Heart left ventricle (tissue), 16 donors: ENCODE measurements at regions of chr6 and their contacts with region 1.

Region 1: GRCh38 chr6:25223490-25223991 is 55.6 kb upstream of the CARMIL1 start:
- DNase-seq: peak; percentile 50 to 73 (median 61)
- ATAC-seq: peak in 2 of 4 donors; percentile 54 to 63
- H3K4me3 ChIP-seq: peak overlapping the region in 9 of 12 donors; percentile 23 to 39 (median 30)
- H3K27ac ChIP-seq: peak overlapping the region in 8 of 12 donors; percentile 5 to 54 (median 26)
- H3K4me1 ChIP-seq: peaks cover 2 to 33% (median 9%) of the 10 kb centered on the region in 12 donors
- H3K27me3 ChIP-seq: no peaks in the 10 kb centered on the region
- CTCF ChIP-seq: peak; percentile 77 to 94 (median 88)
- POLR2A ChIP-seq: no peak

Region 2: DNA sequence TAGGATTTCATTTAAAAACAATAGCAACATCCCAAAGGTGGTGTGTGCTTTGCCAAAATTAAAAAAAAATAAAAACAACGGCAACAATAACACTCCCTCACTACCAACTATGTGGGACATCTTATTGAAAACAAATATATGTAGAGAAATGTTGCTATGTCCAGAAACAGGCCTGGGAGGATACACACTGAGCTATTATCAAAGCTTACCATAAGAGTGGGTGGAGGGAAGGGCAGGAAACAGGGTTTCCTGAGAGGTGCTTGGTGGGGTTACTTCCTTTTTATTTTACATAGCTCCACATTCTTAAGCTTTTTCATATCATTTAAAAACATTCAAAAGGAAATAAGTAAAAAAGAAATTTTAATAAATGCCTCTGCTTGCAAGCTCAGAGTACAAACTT is 137.8 kb before region 1 on chr6:
- intact Hi-C with region 1: no loop called
- DNase-seq: peak in 2 of 5 donors; percentile 27 to 32
- ATAC-seq: peak; percentile 44 to 90 (median 84)
- H3K4me3 ChIP-seq: no peak overlapping the region
- H3K27ac ChIP-seq: peak overlapping the region; percentile 10 to 79 (median 64)
- H3K4me1 ChIP-seq: peaks cover 0 to 57% (median 16%) of the 10 kb centered on the region in 12 donors
- H3K27me3 ChIP-seq: no peaks in the 10 kb centered on the region
- CTCF ChIP-seq: no peak
- POLR2A ChIP-seq: no peak

Region 3: DNA sequence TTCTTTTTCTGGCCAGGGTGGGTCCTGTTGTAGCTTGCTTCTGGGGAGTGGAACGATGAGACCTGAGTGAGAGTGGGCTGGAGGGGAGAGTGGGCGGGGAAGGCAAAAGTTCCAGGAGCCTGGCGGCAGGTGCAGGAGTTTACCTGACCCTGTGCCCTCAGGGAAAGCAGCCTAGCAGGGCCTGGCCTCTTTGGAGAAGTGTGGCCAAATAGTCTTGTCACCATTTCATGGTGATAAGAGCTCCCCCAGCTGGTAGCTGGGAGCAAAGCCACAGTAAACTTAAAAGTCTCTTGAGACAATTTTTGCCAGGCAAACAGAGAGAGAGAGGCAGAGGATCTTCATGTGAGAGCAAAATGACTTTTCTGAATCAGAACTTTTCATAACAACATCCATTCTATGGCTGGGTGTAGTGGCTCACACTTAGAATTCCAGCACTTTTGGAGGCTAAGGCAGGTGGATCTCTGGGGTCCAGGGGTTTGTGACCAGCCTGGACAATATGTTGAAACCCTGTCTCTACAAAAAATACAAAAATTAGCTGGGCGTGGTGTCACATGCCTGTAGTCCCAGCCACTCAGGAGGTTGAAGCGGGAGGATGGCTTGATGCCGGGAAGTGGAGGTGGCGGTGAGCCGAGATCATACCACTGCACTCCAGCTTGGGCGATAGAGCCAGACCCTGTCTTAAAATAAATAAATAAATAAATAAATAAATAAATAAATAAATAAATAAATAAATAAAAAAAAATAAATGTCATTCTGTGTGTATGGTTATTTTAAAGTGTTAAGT is 266.7 kb after region 1 on chr6:
- intact Hi-C with region 1: loop called in 3 of 10 experiments (anchors 2 to 5 kb)
- DNase-seq: peak; percentile 61 to 74 (median 72)
- ATAC-seq: peak; percentile 57 to 90 (median 86)
- H3K4me3 ChIP-seq: no peak overlapping the region
- H3K27ac ChIP-seq: peak overlapping the region in 4 of 12 donors; percentile 6 to 37 (median 26)
- H3K4me1 ChIP-seq: peaks cover 0 to 28% (median 15%) of the 10 kb centered on the region in 12 donors
- H3K27me3 ChIP-seq: no peaks in the 10 kb centered on the region
- CTCF ChIP-seq: peak; percentile 59 to 87 (median 78)
- POLR2A ChIP-seq: no peak

Region 4: DNA sequence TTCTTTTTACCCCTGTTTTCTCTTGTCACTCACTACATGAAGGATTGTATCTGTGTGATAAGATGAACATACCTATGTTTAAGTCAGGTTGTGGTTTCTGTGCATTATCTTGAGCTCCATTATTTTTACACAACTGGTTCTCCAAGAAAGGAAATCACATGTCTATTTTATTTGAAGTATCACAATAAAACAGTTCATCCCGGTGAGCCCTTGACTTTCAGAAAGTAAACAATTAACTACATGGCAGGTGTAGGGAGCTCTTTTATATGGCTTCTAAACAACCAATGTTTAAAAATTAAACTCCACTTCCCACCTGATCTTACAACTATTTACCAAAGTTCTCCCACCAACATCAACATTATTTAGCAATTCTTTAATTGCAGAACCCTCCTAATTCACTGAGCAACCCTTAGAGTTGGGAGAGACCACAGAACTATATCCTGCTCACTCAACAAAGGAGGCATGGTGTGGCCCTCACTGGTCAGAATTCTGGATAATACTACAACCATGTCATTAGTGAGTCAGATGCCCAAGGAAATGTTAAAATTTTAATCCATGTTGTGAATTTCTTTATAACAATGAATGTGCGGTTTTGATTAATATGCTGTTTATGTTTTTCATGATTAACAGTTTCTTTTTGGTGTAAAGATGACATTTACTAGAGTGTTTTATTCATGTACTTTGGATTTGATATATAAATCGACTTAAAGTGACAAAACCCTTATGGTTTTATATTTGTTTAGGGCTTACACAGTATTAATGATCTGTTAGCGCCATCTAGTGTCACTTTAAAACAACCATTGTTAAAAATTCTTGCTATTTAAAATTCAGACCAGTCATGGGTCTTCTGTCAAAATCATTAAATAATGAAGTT is 378.5 kb after region 1 on chr6:
- intact Hi-C with region 1: loop called in 7 of 10 experiments (anchors 2 to 10 kb)
- DNase-seq: no peak
- ATAC-seq: peak in 1 of 4 donors; percentile 22
- H3K4me3 ChIP-seq: no peak overlapping the region
- H3K27ac ChIP-seq: no peak overlapping the region
- H3K4me1 ChIP-seq: no peaks in the 10 kb centered on the region
- H3K27me3 ChIP-seq: peaks cover 0 to 3% (median 0%) of the 10 kb centered on the region in 9 donors
- CTCF ChIP-seq: peak; percentile 43 to 71 (median 62)
- POLR2A ChIP-seq: no peak

Region 5: GRCh38 chr6:25717866-25718740 is 494.6 kb after region 1 on chr6:
- intact Hi-C with region 1: loop called in 4 of 10 experiments (anchors 5 to 10 kb)
- DNase-seq: no peak
- ATAC-seq: no peak
- H3K4me3 ChIP-seq: no peak overlapping the region
- H3K27ac ChIP-seq: no peak overlapping the region
- H3K4me1 ChIP-seq: peaks cover 0 to 6% (median 0%) of the 10 kb centered on the region in 12 donors
- H3K27me3 ChIP-seq: peaks cover 0 to 12% (median 0%) of the 10 kb centered on the region in 9 donors
- CTCF ChIP-seq: peak; percentile 21 to 70 (median 54)
- POLR2A ChIP-seq: no peak